Pancreas (tissue), 10 donors: ENCODE measurements at regions of chr20 and their contacts with region 1.

Region 1: DNA sequence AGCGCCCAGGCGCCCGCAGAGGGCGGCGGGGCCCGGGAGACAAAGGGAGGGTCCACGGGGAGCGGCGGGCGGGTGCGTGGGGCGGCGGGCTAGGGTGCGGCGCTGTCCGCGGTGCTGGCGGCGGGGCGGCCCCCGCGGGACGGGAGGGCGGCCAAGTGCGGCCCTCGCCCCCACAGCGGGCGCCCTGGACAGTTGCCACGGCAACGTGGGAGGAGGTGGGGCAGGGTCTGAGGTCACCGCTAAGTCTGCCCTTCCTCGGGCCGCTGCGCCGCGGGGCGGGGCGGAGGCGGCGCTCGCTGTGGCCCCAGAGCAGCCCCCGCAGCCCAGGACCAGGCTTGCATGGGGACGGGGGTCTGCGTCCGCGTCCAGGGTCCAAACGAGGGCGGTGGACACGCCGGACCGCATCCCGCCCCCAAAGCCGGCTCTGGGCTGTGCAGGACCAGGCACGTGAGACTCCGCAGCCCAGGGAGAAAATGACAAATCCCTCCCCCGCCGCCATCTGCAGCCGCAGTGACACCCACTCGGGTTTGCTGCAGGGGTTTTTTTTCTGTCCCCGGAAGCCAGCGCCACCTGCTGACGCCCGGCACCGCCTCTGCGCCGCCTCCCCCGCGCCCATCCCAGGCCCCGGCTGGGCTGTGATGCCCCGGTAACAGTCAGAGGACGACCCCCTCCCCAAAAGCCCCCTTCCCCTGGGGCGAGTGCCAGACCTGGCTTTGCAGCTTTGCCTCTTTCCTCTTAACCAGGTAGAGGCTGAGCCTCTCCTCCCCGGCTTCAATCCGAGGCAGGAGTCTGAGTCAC is 36.8 kb downstream of the YTHDF1 start:
- DNase-seq: peak in 4 of 6 donors; percentile 8 to 76 (median 36)
- ATAC-seq: peak; percentile 31 to 69 (median 41)
- H3K4me3 ChIP-seq: peak overlapping the region in 2 of 4 donors; percentile 8 to 36
- H3K27ac ChIP-seq: no peak overlapping the region
- H3K4me1 ChIP-seq: peaks cover 0 to 10% (median 0%) of the 10 kb centered on the region in 3 donors
- H3K27me3 ChIP-seq: peaks cover 0 to 51% (median 15%) of the 10 kb centered on the region in 4 donors
- CTCF ChIP-seq: peak in 1 of 4 donors; percentile 8

Region 2: GRCh38 chr20:63054681-63055240 is 124.3 kb before region 1 on chr20:
- intact Hi-C with region 1: loop called in 1 of 3 experiments (anchors 5 kb)
- DNase-seq: peak in 2 of 6 donors; percentile 47 to 49
- ATAC-seq: no peak
- H3K4me3 ChIP-seq: no peak overlapping the region
- H3K27ac ChIP-seq: no peak overlapping the region
- H3K4me1 ChIP-seq: no peaks in the 10 kb centered on the region
- H3K27me3 ChIP-seq: peaks cover 0 to 3% (median 0%) of the 10 kb centered on the region in 4 donors
- CTCF ChIP-seq: no peak

Region 3: DNA sequence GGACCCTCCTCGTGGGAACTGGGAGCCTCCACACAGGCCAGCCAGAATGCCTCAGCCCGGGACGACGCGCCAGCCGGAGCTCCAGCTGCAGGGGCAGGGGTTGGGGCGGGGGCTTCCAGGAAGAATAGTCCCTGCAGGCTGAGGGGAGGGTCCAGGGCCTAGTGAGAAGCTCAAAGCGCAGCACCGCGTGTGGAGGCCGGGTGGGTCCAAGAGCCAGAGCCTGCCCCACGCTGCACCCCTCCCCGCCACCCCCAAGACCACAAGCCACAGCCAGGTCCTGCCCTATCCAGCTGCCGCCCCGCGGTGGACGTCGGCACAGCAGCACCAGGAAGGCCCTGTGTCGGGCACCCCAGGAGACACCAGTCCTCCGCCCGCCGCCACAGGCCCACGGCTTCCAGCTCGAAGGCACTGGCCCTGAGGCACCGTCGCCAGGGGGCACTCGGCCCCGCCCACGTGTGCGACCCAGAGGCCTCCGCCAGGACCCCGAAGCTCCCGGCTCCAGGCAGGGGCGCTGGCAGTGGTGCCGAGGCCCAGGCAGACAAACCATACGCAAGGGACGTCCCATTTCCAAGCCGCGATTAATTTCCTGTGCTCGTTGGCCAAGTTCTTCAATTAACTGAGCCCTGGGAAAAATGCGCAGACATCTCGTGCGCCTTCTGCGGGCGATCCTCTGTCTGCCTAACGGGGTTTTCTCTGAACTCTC is 273.9 kb after region 1 on chr20:
- intact Hi-C with region 1: no loop called
- DNase-seq: no peak
- ATAC-seq: peak in 2 of 4 donors; percentile 10 to 17
- H3K4me3 ChIP-seq: no peak overlapping the region
- H3K27ac ChIP-seq: no peak overlapping the region
- H3K4me1 ChIP-seq: no peaks in the 10 kb centered on the region
- H3K27me3 ChIP-seq: peaks cover 0 to 11% (median 1%) of the 10 kb centered on the region in 4 donors
- CTCF ChIP-seq: no peak